WTC11 (cell line): ENCODE measurements at regions of chr5 and their contacts with region 1.

Region 1: GRCh38 chr5:173331956-173332479 is 3.8 kb upstream of the STC2 start:
- DNase-seq: peak; percentile 89
- ATAC-seq: peak; percentile 31
- H3K4me3 Mint-ChIP-seq: no peak overlapping the region
- H3K27ac Mint-ChIP-seq: no peak overlapping the region
- H3K4me1 Mint-ChIP-seq: peaks cover 27% of the 10 kb centered on the region
- H3K27me3 Mint-ChIP-seq: peaks cover 8% of the 10 kb centered on the region
- CTCF ChIP-seq: peak; percentile 79

Region 2: GRCh38 chr5:173302547-173303066 is 29.4 kb before region 1 on chr5:
- CTCF ChIA-PET with region 1: interaction called, 169 read pairs
- POLR2A ChIA-PET with region 1: interaction called, 55 read pairs
- DNase-seq: no peak
- ATAC-seq: peak; percentile 74
- H3K4me3 Mint-ChIP-seq: no peak overlapping the region
- H3K27ac Mint-ChIP-seq: peak overlapping the region; percentile 93
- H3K4me1 Mint-ChIP-seq: peaks cover 51% of the 10 kb centered on the region
- H3K27me3 Mint-ChIP-seq: peaks cover 19% of the 10 kb centered on the region
- CTCF ChIP-seq: no peak

Region 3: GRCh38 chr5:173315495-173316350 is 16.3 kb before region 1 on chr5:
- CTCF ChIA-PET with region 1: interaction called, 9 read pairs
- POLR2A ChIA-PET with region 1: interaction called, 79 read pairs
- DNase-seq: no peak
- ATAC-seq: peak; percentile 50
- H3K4me3 Mint-ChIP-seq: no peak overlapping the region
- H3K27ac Mint-ChIP-seq: peak overlapping the region; percentile 91
- H3K4me1 Mint-ChIP-seq: peaks cover 42% of the 10 kb centered on the region
- H3K27me3 Mint-ChIP-seq: peaks cover 16% of the 10 kb centered on the region
- CTCF ChIP-seq: no peak

Region 4: GRCh38 chr5:173396311-173396993 is 64.4 kb after region 1 on chr5:
- CTCF ChIA-PET with region 1: no interaction called
- POLR2A ChIA-PET with region 1: no interaction called
- DNase-seq: peak; percentile 73
- ATAC-seq: peak; percentile 96
- H3K4me3 Mint-ChIP-seq: no peak overlapping the region
- H3K27ac Mint-ChIP-seq: no peak overlapping the region
- H3K4me1 Mint-ChIP-seq: 0 out of 2 replicates have a peak, but pooled peaks cover 3% of the 10 kb centered on the region
- H3K27me3 Mint-ChIP-seq: peaks cover 5% of the 10 kb centered on the region
- CTCF ChIP-seq: no peak; the same call in 1 of the 2 replicates

Region 5: GRCh38 chr5:173468821-173469251 is 136.8 kb after region 1 on chr5:
- CTCF ChIA-PET with region 1: no interaction called
- POLR2A ChIA-PET with region 1: no interaction called
- DNase-seq: no peak
- ATAC-seq: no peak
- H3K4me3 Mint-ChIP-seq: no peak overlapping the region
- H3K27ac Mint-ChIP-seq: no peak overlapping the region
- H3K4me1 Mint-ChIP-seq: peaks cover 12% of the 10 kb centered on the region
- H3K27me3 Mint-ChIP-seq: peaks cover 14% of the 10 kb centered on the region
- CTCF ChIP-seq: no peak